T-cell (primary cell): ENCODE measurements at regions of chr6 and their contacts with region 1.

Region 1: DNA sequence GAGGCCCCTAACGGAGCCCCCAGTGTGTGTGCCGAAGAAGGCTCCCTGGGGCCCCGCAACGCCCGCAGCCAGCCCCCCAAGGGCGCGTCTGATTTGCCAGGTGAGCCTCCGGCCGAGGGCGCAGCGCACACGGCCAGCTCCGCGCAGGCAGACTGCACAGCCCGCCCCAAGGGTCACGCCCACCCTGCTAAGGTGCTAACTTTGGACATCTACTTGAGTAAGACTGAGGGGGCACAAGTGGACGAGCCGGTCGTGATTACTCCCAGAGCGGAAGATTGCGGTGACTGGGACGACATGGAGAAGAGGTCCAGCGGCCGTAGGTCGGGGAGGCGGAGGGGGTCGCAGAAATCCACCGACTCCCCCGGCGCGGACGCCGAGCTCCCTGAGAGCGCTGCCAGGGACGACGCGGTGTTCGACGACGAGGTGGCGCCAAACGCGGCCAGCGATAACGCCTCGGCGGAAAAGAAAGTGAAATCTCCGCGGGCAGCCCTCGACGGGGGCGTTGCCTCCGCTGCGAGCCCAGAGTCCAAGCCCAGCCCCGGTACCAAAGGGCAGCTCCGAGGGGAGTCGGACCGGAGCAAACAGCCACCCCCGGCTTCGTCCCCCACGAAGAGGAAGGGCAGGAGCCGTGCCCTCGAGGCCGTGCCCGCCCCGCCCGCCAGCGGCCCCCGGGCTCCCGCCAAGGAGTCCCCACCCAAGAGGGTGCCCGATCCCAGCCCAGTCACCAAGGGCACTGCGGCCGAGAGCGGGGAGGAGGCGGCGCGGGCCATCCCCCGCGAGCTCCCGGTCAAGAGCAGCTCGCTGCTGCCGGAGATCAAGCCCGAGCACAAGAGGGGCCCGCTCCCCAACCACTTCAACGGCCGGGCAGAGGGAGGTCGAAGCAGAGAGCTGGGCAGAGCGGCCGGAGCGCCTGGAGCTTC is 117.0 kb downstream of the RTN4IP1 start:
- DNase-seq: peak; percentile 53 to 89 (median 75)
- ATAC-seq: peak; percentile 75 to 82 (median 78)
- H3K4me3 ChIP-seq: peak overlapping the region; percentile 82 to 91
- H3K4me3 Mint-ChIP-seq: peak overlapping the region; percentile 94 to 97 (median 96)
- H3K27ac ChIP-seq: peak overlapping the region; percentile 95
- H3K27ac Mint-ChIP-seq: peak overlapping the region; percentile 95 to 97
- H3K4me1 ChIP-seq: peaks cover 35 to 48% of the 10 kb centered on the region in 2 experiments
- H3K4me1 Mint-ChIP-seq: peaks cover 55 to 60% (median 55%) of the 10 kb centered on the region in 3 donors
- H3K27me3 ChIP-seq: peaks cover 0 to 4% of the 10 kb centered on the region in 2 experiments
- H3K27me3 Mint-ChIP-seq: no peaks in the 10 kb centered on the region

Region 2: DNA sequence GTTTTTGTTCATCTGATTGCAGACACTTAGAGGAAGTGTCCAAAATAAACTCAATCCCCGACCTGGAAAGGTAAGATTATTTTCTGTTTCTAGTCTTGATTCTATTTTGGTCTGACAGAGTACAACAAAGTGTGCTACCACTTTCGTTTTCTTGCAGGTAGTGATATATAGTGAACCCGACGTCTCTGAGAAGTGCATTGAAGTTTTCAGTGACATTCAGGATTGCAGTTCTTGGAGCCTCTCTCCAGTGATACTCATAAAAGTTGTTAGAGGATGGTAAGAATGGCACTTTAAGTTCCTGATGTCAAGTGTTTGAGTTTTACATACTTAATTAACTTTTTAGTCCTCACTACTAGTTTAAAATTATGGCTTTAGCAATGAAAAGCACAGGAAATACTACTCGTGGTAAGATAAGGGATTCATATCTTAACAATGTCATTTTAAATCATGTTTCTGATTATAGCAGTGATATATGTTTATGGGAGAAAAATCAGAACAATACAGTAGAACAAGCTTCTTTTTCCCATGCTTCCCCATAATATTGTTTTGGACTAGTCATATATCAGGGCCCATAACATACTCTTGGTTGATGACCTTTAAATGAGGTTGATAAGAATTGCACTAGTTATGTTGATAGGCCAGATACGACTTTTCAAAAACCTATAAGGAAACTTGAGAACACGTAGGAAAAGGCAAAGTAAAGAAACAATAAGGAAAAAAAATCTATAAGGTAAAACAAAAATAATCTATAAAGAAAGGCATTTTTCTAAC is 13.0 kb after region 1 on chr6:
- CTCF ChIA-PET with region 1: interaction called, 23 to 75 read pairs
- POLR2A ChIA-PET with region 1: interaction called, 7 to 20 read pairs
- DNase-seq: peak in 1 of 35 experiments; percentile 69
- ATAC-seq: peak; percentile 28 to 46 (median 38)
- H3K4me3 ChIP-seq: peak overlapping the region; percentile 47 to 74
- H3K4me3 Mint-ChIP-seq: peak overlapping the region; percentile 85 to 90 (median 88)
- H3K27ac ChIP-seq: peak overlapping the region; percentile 93
- H3K27ac Mint-ChIP-seq: peak overlapping the region; percentile 95 to 96
- H3K4me1 ChIP-seq: peaks cover 17 to 34% of the 10 kb centered on the region in 2 experiments
- H3K4me1 Mint-ChIP-seq: peaks cover 71 to 74% (median 71%) of the 10 kb centered on the region in 3 donors
- H3K27me3 ChIP-seq: no peaks in the 10 kb centered on the region
- H3K27me3 Mint-ChIP-seq: no peaks in the 10 kb centered on the region

Region 3: GRCh38 chr6:106539936-106540335 is 27.6 kb after region 1 on chr6:
- CTCF ChIA-PET with region 1: interaction called, 10 read pairs
- POLR2A ChIA-PET with region 1: interaction called, 7 to 8 read pairs
- DNase-seq: no peak
- ATAC-seq: no peak
- H3K4me3 ChIP-seq: no peak overlapping the region
- H3K4me3 Mint-ChIP-seq: no peak overlapping the region
- H3K27ac ChIP-seq: no peak overlapping the region
- H3K27ac Mint-ChIP-seq: peak overlapping the region; percentile 69 to 91
- H3K4me1 ChIP-seq: peaks cover 16% of the 10 kb centered on the region in 2 experiments
- H3K4me1 Mint-ChIP-seq: peaks cover 52 to 55% (median 54%) of the 10 kb centered on the region in 3 donors
- H3K27me3 ChIP-seq: no peaks in the 10 kb centered on the region
- H3K27me3 Mint-ChIP-seq: no peaks in the 10 kb centered on the region

Region 4: GRCh38 chr6:106556368-106556960 is 44.2 kb after region 1 on chr6:
- CTCF ChIA-PET with region 1: interaction called, 12 to 16 read pairs
- POLR2A ChIA-PET with region 1: interaction called, 4 to 7 read pairs
- DNase-seq: peak in 1 of 35 experiments; percentile 62
- ATAC-seq: peak; percentile 45 to 73 (median 52)
- H3K4me3 ChIP-seq: no peak overlapping the region
- H3K4me3 Mint-ChIP-seq: no peak overlapping the region
- H3K27ac ChIP-seq: no peak overlapping the region
- H3K27ac Mint-ChIP-seq: peak overlapping the region; percentile 43 to 50
- H3K4me1 ChIP-seq: no peaks in the 10 kb centered on the region
- H3K4me1 Mint-ChIP-seq: peaks cover 9 to 19% (median 14%) of the 10 kb centered on the region in 3 donors
- H3K27me3 ChIP-seq: no peaks in the 10 kb centered on the region
- H3K27me3 Mint-ChIP-seq: no peaks in the 10 kb centered on the region